Activated B cell treated with CpG ODN at 0.5 μM for 24 hours (primary cell): ENCODE measurements at regions of chr4 and their contacts with region 1.

Region 1: GRCh38 chr4:105061136-105061696 is 85.5 kb upstream of the TET2 start:
- DNase-seq: no peak
- ATAC-seq: peak; percentile 43
- H3K4me3 Mint-ChIP-seq: peak overlapping the region; percentile 74
- H3K27ac Mint-ChIP-seq: peak overlapping the region; percentile 87
- H3K4me1 Mint-ChIP-seq: peaks cover 46% of the 10 kb centered on the region
- H3K27me3 Mint-ChIP-seq: no peaks in the 10 kb centered on the region
- CTCF ChIP-seq: no peak

Region 2: GRCh38 chr4:104743215-104743653 is 318.0 kb before region 1 on chr4:
- CTCF ChIA-PET with region 1: no interaction called
- POLR2A ChIA-PET with region 1: no interaction called
- intact Hi-C with region 1: loop called (anchors 5 kb)
- DNase-seq: no peak
- ATAC-seq: peak; percentile 87
- H3K4me3 Mint-ChIP-seq: peak overlapping the region; percentile 42
- H3K27ac Mint-ChIP-seq: peak overlapping the region; percentile 83
- H3K4me1 Mint-ChIP-seq: peaks cover 22% of the 10 kb centered on the region
- H3K27me3 Mint-ChIP-seq: peaks cover 2% of the 10 kb centered on the region
- CTCF ChIP-seq: no peak

Region 3: GRCh38 chr4:104966349-104967033 is 94.7 kb before region 1 on chr4:
- CTCF ChIA-PET with region 1: no interaction called
- POLR2A ChIA-PET with region 1: no interaction called
- intact Hi-C with region 1: loop called (anchors 1 kb)
- DNase-seq: no peak
- ATAC-seq: peak; percentile 97
- H3K4me3 Mint-ChIP-seq: peak overlapping the region; percentile 70
- H3K27ac Mint-ChIP-seq: peak overlapping the region; percentile 86
- H3K4me1 Mint-ChIP-seq: peaks cover 23% of the 10 kb centered on the region
- H3K27me3 Mint-ChIP-seq: peaks cover 4% of the 10 kb centered on the region
- CTCF ChIP-seq: no peak

Region 4: GRCh38 chr4:105002278-105002677 is 58.9 kb before region 1 on chr4:
- CTCF ChIA-PET with region 1: no interaction called
- POLR2A ChIA-PET with region 1: no interaction called
- intact Hi-C with region 1: loop called (anchors 10 kb)
- DNase-seq: no peak
- ATAC-seq: no peak
- H3K4me3 Mint-ChIP-seq: no peak overlapping the region
- H3K27ac Mint-ChIP-seq: no peak overlapping the region
- H3K4me1 Mint-ChIP-seq: no peaks in the 10 kb centered on the region
- H3K27me3 Mint-ChIP-seq: peaks cover 4% of the 10 kb centered on the region
- CTCF ChIP-seq: no peak

Region 5: GRCh38 chr4:105088110-105088879 is 27.1 kb after region 1 on chr4:
- CTCF ChIA-PET with region 1: no interaction called
- POLR2A ChIA-PET with region 1: no interaction called
- intact Hi-C with region 1: no loop called
- DNase-seq: no peak
- ATAC-seq: no peak
- H3K4me3 Mint-ChIP-seq: no peak overlapping the region
- H3K27ac Mint-ChIP-seq: no peak overlapping the region
- H3K4me1 Mint-ChIP-seq: no peaks in the 10 kb centered on the region
- H3K27me3 Mint-ChIP-seq: peaks cover 5% of the 10 kb centered on the region
- CTCF ChIP-seq: no peak

Region 6: GRCh38 chr4:105306158-105306781 is 245.1 kb after region 1 on chr4:
- CTCF ChIA-PET with region 1: no interaction called
- POLR2A ChIA-PET with region 1: no interaction called
- intact Hi-C with region 1: loop called (anchors 1 kb)
- DNase-seq: no peak
- ATAC-seq: peak; percentile 93
- H3K4me3 Mint-ChIP-seq: peak overlapping the region; percentile 74
- H3K27ac Mint-ChIP-seq: peak overlapping the region; percentile 90
- H3K4me1 Mint-ChIP-seq: peaks cover 22% of the 10 kb centered on the region
- H3K27me3 Mint-ChIP-seq: no peaks in the 10 kb centered on the region
- CTCF ChIP-seq: no peak